ENCODE measurements at regions of chr14 and their contacts with region 1.

Region 1: GRCh38 chr14:102437997-102438915 is 71.3 kb downstream of the ANKRD9 start:
- DNase-seq: peak; percentile 84 to 94 (median 90)
- H3K4me3 ChIP-seq: peak overlapping the region in 57 of 59 donors; percentile 2 to 63 (median 43)
- H3K27ac ChIP-seq: peak overlapping the region in 57 of 59 donors; percentile 9 to 92 (median 78)
- H3K27me3 ChIP-seq: no peaks in the 10 kb centered on the region
- CTCF ChIP-seq: peak; percentile 74 to 97 (median 92)

Region 2: GRCh38 chr14:102362545-102363181 is 75.6 kb before region 1 on chr14 and contains the starts of genes CINP and TECPR2:
- intact Hi-C with region 1: loop called in 1 of 2 experiments (anchors 5 kb)
- DNase-seq: peak; percentile 99 to 100 (median 99)
- H3K4me3 ChIP-seq: peak within 1 kb of the TSS; percentile 66 to 98 (median 88)
- H3K27ac ChIP-seq: peak within 1 kb of the TSS; percentile 72 to 100 (median 98)
- H3K27me3 ChIP-seq: no peaks in the 10 kb centered on the region
- CTCF ChIP-seq: peak in 12 of 56 donors; percentile 7 to 46 (median 18)
- total RNA-seq, gene CINP: 31.4 to 69.6 (median 51.2) TPM
- total RNA-seq, gene TECPR2: 54.3 to 129 (median 78.9) TPM